ENCODE measurements at regions of chr6 and their contacts with region 1.

Region 1: DNA sequence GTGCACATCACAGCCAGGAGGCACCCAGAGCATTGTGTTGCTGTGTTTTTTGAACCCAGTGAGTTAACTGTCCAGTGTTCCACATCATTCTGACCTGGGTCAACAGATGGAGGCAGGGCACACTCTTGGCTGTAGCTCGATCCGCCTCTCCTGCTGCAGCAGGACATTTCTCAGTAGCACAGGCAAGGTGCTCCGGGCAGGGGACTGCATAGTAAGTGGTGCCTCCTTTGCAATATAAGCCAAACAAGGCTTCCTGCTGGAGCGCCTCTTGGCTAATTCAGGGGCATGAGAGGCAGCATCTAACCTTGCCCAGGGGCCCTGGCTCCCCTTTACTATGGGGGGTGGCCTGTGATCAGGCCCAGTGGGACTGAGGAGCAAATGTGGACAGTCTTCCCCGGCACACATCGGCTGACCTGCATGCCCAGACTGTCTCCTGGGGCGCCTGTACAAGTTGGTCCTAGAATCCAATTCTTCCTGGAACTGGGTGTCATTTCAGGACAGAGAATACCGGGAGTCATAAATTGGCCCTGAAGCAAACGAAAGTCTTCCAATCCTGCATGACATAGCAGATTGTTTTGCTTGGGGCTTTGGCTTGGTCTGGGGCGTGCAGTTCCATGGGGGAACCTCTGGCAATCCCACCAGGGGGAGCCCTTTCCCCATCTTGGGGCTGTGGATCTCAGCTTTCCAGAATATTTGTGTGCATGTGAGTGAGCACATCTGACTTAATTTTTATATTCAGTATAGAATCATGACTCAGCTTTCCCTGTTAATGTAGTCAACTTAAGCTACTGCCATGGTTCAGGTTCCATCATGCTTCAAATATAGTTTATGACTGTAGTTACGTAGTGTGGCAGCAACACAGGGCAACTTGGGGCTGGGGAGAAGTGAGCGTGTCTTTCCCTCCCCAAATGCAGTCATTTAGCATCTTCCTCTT is 56.0 kb upstream of the DDR1 start:
- DNase-seq: peak; percentile 96
- ATAC-seq: peak; percentile 95

Region 2: DNA sequence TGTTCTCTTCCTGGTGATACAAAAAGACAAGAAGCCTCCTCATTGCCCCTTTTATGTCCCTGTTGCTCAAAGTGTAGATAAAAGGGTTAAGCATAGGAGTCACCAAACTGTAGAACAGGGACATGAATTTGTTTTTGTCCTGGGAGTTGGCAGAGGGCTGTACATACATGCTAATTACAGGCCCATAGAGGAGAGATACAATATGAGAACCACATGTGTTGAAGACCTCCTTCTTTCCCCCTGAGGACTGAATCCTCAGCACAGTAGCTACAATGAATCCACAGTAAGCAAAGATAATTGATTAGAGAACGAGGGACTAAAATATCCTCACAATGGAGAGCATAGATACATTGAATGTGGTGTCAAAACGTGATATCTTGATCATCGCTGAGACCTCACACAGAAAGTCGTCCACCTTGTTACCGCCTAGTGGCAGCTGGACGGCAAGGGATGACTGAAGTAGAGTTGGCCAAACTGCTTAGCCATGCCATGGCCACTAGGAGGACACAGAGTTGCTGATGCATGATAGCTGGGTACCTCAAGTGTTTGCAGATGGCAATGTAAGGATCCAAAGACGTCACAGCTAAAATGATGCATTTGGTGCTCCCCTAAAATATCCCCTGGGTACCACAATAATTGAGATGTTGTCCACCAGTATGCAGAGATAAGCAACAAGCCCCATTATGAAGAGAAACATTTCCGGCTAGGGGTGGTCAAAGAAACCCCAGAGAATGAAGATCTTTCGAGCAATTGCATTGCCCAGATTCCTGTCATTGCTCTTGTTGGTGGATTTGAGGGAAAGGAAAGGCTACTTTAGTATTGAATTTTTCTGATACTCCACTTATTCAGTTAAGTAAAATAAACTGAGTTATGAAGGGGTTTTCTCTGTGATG is 1756.2 kb before region 1 on chr6:
- intact Hi-C with region 1: no loop called
- DNase-seq: no peak
- ATAC-seq: no peak

Region 3: DNA sequence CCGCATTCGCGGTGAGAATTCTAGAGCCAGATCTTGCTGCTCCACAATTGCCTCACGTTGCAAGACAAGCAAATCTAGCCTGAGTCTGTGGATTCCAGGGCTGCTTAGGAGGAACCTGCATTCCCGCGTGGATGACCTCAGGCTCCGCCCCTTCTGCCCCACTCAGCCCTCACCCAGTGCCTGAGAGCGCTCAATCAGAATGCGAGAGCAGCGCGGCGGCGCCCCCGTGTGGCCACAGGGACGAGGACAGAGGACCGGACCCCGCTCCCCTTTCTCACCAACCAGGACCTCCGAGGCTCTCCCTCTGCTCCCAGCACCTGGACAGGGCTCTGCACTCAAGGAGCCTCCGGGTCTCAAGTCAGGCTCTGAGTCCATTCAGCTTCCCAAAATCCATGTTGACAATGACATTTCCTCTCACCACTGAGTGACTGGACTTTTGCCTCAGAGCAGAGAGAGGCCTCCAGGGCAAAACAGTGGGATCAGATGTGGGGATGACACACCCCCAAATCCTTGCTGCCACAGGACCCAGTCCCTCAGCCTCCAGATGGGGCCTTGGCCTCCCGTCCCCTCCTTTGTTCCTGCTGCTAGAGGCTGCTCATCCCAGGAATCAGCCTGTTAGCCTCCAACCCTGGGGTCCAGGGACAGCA is 431.3 kb before region 1 on chr6:
- intact Hi-C with region 1: no loop called
- DNase-seq: peak; percentile 89
- ATAC-seq: peak; percentile 93

Region 4: GRCh38 chr6:30787954-30788353 is 40.3 kb before region 1 on chr6:
- intact Hi-C with region 1: no loop called
- DNase-seq: no peak
- ATAC-seq: no peak

Region 5: GRCh38 chr6:30883685-30884520 is 55.6 kb after region 1 on chr6 and contains the start of gene DDR1:
- intact Hi-C with region 1: loop called (anchors 5 kb)
- DNase-seq: peak; percentile 88
- ATAC-seq: peak; percentile 78
- total RNA-seq, gene DDR1: 93.5 TPM